ENCODE measurements at regions of chrX and their contacts with region 1.

Region 1: DNA sequence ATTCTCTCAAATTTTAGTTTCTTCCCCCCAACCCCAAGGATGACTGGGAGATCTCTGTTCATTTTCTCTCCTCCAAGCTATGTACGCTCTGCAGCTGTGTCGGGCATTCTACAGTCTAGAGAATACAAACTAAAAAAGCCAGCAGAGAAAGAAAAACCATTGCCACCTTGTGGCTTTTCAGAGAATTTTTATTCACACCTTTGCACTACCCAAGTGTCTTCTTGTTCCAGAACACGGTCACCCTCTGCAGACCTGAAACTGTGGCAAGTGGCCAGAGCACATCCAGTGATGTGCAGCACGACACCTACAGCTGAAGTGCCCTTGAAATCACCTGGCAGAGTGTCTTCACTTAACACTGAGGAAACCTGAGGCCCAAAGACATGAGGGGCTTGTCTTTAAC is 68.6 kb downstream of the CHST7 start:
- DNase-seq: no peak
- ATAC-seq: peak; percentile 42
- H3K4me3 Mint-ChIP-seq: no peak overlapping the region
- H3K27ac Mint-ChIP-seq: peak overlapping the region; percentile 56
- H3K4me1 Mint-ChIP-seq: peaks cover 54% of the 10 kb centered on the region
- H3K27me3 Mint-ChIP-seq: no peaks in the 10 kb centered on the region
- CTCF ChIP-seq: no peak

Region 2: GRCh38 chrX:46381630-46382029 is 260.5 kb before region 1 on chrX:
- CTCF ChIA-PET with region 1: no interaction called
- POLR2A ChIA-PET with region 1: no interaction called
- intact Hi-C with region 1: loop called (anchors 5 kb)
- DNase-seq: no peak
- ATAC-seq: peak; percentile 40
- H3K4me3 Mint-ChIP-seq: no peak overlapping the region
- H3K27ac Mint-ChIP-seq: no peak overlapping the region
- H3K4me1 Mint-ChIP-seq: no peaks in the 10 kb centered on the region
- H3K27me3 Mint-ChIP-seq: no peaks in the 10 kb centered on the region
- CTCF ChIP-seq: no peak

Region 3: GRCh38 chrX:46446727-46447378 is 195.3 kb before region 1 on chrX:
- CTCF ChIA-PET with region 1: no interaction called
- POLR2A ChIA-PET with region 1: no interaction called
- intact Hi-C with region 1: loop called (anchors 5 kb)
- DNase-seq: peak; percentile 81
- ATAC-seq: peak; percentile 98
- H3K4me3 Mint-ChIP-seq: peak overlapping the region; percentile 85
- H3K27ac Mint-ChIP-seq: peak overlapping the region; percentile 85
- H3K4me1 Mint-ChIP-seq: peaks cover 11% of the 10 kb centered on the region
- H3K27me3 Mint-ChIP-seq: no peaks in the 10 kb centered on the region
- CTCF ChIP-seq: no peak

Region 4: GRCh38 chrX:46554942-46555341 is 87.2 kb before region 1 on chrX:
- CTCF ChIA-PET with region 1: interaction called, 5 read pairs
- POLR2A ChIA-PET with region 1: no interaction called
- intact Hi-C with region 1: loop called (anchors 1 kb)
- DNase-seq: no peak
- ATAC-seq: no peak
- H3K4me3 Mint-ChIP-seq: no peak overlapping the region
- H3K27ac Mint-ChIP-seq: no peak overlapping the region
- H3K4me1 Mint-ChIP-seq: no peaks in the 10 kb centered on the region
- H3K27me3 Mint-ChIP-seq: peaks cover 6% of the 10 kb centered on the region
- CTCF ChIP-seq: no peak

Region 5: DNA sequence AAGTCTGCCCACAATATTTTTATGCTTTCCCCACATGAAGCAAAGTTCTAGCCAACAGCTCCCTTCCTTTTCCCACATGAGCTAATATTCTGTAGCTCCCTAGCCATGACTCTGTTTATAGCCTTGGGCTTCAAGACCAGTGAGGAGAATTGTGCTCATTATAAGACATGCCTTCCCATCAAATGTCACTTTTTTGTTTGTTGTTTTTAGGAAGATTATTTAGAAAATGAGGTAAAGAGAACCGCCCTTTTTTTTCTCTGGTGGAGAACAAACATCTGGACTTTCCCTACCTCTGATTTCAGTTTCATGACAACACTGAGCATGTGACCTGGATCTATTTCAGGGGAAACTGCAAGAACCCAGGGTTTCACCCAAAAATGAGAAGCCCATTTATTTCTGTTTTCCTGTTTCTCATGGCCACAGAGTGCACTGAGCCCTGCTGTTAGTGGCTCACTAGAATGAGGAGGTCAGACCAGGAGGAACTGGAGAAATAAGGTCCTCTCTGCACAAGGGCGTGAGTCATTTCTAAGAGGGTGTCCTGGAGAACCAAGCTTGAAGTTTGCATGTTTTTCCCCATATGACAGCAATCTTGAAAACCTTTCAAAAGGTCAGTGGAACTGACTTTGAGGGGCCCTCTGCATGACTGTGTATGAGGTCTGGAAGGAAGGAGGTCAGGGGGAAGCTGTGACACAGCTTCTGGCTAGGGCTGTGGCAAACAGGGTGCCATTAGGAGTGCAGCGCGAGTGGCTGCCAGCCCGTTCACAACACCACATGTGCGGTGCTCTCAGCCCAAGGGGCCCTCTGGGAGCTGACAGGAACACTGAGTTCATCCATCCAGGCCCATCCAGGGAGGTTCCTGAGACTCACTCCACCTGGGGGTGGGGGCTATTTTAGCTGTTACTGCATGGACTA is 13.4 kb before region 1 on chrX:
- CTCF ChIA-PET with region 1: interaction called, 3 read pairs
- POLR2A ChIA-PET with region 1: interaction called, 20 read pairs
- intact Hi-C with region 1: loop called (anchors 1 kb)
- DNase-seq: peak; percentile 16
- ATAC-seq: peak; percentile 78
- H3K4me3 Mint-ChIP-seq: peak overlapping the region; percentile 60
- H3K27ac Mint-ChIP-seq: peak overlapping the region; percentile 90
- H3K4me1 Mint-ChIP-seq: peaks cover 51% of the 10 kb centered on the region
- H3K27me3 Mint-ChIP-seq: no peaks in the 10 kb centered on the region
- CTCF ChIP-seq: no peak

Region 6: GRCh38 chrX:46665232-46666152 is 23.3 kb after region 1 on chrX:
- CTCF ChIA-PET with region 1: no interaction called
- POLR2A ChIA-PET with region 1: no interaction called
- intact Hi-C with region 1: no loop called
- DNase-seq: no peak
- ATAC-seq: no peak
- H3K4me3 Mint-ChIP-seq: no peak overlapping the region
- H3K27ac Mint-ChIP-seq: no peak overlapping the region
- H3K4me1 Mint-ChIP-seq: peaks cover 7% of the 10 kb centered on the region
- H3K27me3 Mint-ChIP-seq: no peaks in the 10 kb centered on the region
- CTCF ChIP-seq: no peak

Region 7: DNA sequence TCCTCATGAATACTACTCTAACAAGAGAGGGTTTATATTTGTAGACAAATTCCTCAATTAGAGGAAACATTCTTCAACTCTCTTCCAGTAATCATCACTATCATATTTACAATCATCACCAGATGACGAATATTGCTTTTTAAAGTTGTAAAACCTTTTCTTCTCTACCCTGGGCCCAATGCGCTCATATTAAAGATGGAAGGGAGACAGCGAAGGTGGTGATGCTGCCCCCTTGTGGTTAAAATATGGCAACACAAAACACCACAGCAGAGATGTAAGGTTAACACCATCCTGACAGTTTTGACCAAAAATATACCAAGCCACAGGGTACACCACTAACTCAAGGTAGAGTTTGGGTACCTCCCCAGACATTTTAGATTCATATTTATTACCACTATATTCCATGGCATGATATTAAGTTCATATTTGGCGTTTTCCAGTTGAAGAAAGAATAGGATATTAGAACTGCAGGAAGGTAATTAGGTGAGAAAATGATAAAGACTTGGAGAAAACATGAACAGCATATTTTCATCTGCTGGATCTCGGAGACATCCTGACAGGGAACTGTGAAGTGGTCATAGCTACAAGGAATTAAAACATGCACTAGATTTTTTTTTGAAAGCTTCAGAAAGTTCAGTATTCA is 44.0 kb after region 1 on chrX:
- CTCF ChIA-PET with region 1: no interaction called
- POLR2A ChIA-PET with region 1: no interaction called
- intact Hi-C with region 1: loop called (anchors 5 kb)
- DNase-seq: no peak
- ATAC-seq: peak; percentile 65
- H3K4me3 Mint-ChIP-seq: no peak overlapping the region
- H3K27ac Mint-ChIP-seq: no peak overlapping the region
- H3K4me1 Mint-ChIP-seq: peaks cover 57% of the 10 kb centered on the region
- H3K27me3 Mint-ChIP-seq: no peaks in the 10 kb centered on the region
- CTCF ChIP-seq: no peak

Measured in activated B cell treated with CpG ODN at 0.5 μM for 24 hours (primary cell).